GM12878 (cell line): ENCODE measurements at regions of chr18 and their contacts with region 1.

Region 1: DNA sequence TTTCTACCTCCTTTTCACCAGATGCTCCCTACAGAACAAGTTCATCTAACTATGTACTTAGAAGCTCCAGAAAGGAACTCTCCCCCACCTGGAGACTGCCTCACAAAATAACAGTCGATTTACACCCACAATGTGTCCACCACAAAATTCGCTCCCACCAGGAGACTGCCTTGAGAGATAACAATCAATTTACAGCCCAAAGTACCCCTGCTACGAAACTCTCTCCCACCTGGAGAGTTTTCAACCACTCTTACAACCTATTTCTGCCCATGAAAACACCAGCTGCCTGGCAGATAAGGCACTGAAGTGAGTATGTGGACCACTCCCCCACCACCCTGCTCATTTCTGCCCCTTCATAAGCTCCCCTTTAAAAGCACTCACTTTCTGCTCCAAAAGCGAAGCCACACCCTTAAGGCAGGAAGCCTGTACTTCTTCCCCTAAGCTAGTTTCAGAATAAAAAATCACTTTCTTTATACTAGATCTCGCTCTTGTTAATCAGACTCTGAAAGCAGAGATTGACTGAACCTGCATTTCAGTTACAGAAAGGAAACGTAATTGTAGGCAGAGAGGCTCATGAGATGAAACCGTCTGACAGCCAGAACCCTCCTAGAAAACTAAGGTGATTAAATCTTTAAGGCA is 94.4 kb upstream of the RBBP8 start:
- DNase-seq: peak; percentile 8
- ATAC-seq: peak; percentile 89
- H3K4me3 ChIP-seq: peak overlapping the region; percentile 30; the same call in 1 of the 2 replicates
- H3K27ac ChIP-seq: no peak overlapping the region
- H3K4me1 ChIP-seq: peaks cover 9% of the 10 kb centered on the region
- H3K27me3 ChIP-seq: no peaks in the 10 kb centered on the region
- CTCF ChIP-seq: no peak
- EP300 ChIP-seq: no peak
- POLR2A ChIP-seq: no peak
- RAD21 ChIP-seq: no peak

Region 2: GRCh38 chr18:22293417-22293816 is 545.3 kb before region 1 on chr18:
- CTCF ChIA-PET with region 1: no interaction called
- POLR2A ChIA-PET with region 1: no interaction called
- RAD21 ChIA-PET with region 1: no interaction called
- SMC1A ChIA-PET with region 1: no interaction called
- in situ Hi-C with region 1: no loop called
- intact Hi-C with region 1: no loop called
- DNase-seq: no peak
- ATAC-seq: no peak
- H3K4me3 ChIP-seq: no peak overlapping the region
- H3K27ac ChIP-seq: no peak overlapping the region
- H3K4me1 ChIP-seq: no peaks in the 10 kb centered on the region
- H3K27me3 ChIP-seq: no peaks in the 10 kb centered on the region
- CTCF ChIP-seq: no peak
- EP300 ChIP-seq: no peak
- POLR2A ChIP-seq: no peak
- RAD21 ChIP-seq: no peak

Region 3: GRCh38 chr18:22822024-22822423 is 16.7 kb before region 1 on chr18:
- CTCF ChIA-PET with region 1: interaction called, 6 read pairs
- POLR2A ChIA-PET with region 1: no interaction called
- RAD21 ChIA-PET with region 1: interaction called, 11 read pairs
- SMC1A ChIA-PET with region 1: interaction called, 25 read pairs
- in situ Hi-C with region 1: no loop called
- intact Hi-C with region 1: no loop called
- DNase-seq: no peak
- ATAC-seq: no peak
- H3K4me3 ChIP-seq: no peak overlapping the region
- H3K27ac ChIP-seq: no peak overlapping the region
- H3K4me1 ChIP-seq: 0 out of 2 replicates have a peak, but pooled peaks cover 3% of the 10 kb centered on the region
- H3K27me3 ChIP-seq: no peaks in the 10 kb centered on the region
- CTCF ChIP-seq: no peak
- EP300 ChIP-seq: no peak
- POLR2A ChIP-seq: no peak
- RAD21 ChIP-seq: no peak

Region 4: GRCh38 chr18:23053776-23054457 is 215.2 kb after region 1 on chr18:
- CTCF ChIA-PET with region 1: no interaction called
- POLR2A ChIA-PET with region 1: no interaction called
- RAD21 ChIA-PET with region 1: no interaction called
- SMC1A ChIA-PET with region 1: no interaction called
- in situ Hi-C with region 1: no loop called
- intact Hi-C with region 1: no loop called
- DNase-seq: no peak
- ATAC-seq: 0 out of 3 replicates have a peak, but pooled peaks have one; percentile 29
- H3K4me3 ChIP-seq: no peak overlapping the region
- H3K27ac ChIP-seq: no peak overlapping the region
- H3K4me1 ChIP-seq: no peaks in the 10 kb centered on the region
- H3K27me3 ChIP-seq: peaks cover 0 to 1% of the 10 kb centered on the region in 2 experiments; a peak in 1 of 4 replicates
- CTCF ChIP-seq: no peak
- EP300 ChIP-seq: no peak
- POLR2A ChIP-seq: no peak
- RAD21 ChIP-seq: no peak